Activated naive CD8-positive, alpha-beta T cell treated with anti-CD3 and anti-CD28 coated beads, Interleukin-2, amount 10 ng/mL, durations not matched to agents 7 days and 5 days (primary cell): ENCODE measurements at regions of chr9 and their contacts with region 1.

Region 1: GRCh38 chr9:104747558-104748358 is at the start of gene NIPSNAP3A:
- DNase-seq: peak; percentile 92
- ATAC-seq: peak; percentile 92
- H3K4me3 Mint-ChIP-seq: peak within 1 kb of the TSS; percentile 93
- H3K27ac Mint-ChIP-seq: peak within 1 kb of the TSS; percentile 99
- H3K4me1 Mint-ChIP-seq: peaks cover 17% of the 10 kb centered on the region
- H3K27me3 Mint-ChIP-seq: no peaks in the 10 kb centered on the region
- total RNA-seq, gene NIPSNAP3A: 18.3 to 18.7 TPM

Region 2: DNA sequence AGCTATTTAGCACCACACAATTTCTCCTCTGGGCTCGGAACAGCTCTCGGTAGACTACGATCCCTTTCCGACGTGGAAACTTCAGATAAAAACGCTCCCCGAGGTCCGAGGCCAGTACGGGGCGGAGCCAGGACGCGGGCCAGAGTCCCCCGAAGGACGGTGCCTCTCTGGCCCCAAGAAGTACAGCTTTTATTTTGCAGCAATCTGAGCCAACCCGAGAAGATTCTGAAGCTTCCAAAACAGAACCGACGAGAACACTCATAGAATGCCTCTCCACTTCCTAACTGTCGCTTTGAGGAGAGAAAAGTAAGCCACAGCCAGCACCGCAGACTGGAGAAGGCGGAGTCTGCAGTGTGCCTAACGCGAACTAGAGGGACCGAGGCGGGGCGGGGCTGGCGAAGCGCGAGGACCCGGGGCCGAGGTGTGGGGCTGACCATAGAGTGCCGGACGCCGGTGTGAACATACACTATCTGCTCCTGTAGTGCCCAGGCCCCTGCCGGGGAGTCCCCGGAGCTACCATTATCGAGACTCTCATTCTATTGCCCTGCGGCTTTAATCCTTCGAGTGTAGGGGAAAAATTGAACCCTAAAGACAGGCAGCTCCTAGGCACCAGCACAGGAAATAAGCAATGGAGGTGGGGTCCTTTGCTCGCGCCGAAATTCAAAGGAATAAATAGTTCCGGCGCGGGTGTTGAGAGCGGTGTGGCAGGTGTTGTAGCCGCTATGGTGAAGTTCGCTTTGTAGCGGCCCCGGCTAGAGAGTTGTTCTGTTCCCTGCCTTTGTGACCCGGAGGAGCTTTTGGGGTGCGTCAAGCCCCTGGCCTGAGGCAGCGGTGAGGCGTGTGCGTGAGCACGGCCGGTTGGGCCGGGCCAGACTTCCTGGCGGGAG is 653.9 kb before region 1 on chr9 and contains the start of gene SMC2:
- POLR2A ChIA-PET with region 1: interaction called, 28 read pairs
- DNase-seq: peak; percentile 94
- ATAC-seq: peak; percentile 93
- H3K4me3 Mint-ChIP-seq: peak within 1 kb of the TSS; percentile 98
- H3K27ac Mint-ChIP-seq: peak within 1 kb of the TSS; percentile 99
- H3K4me1 Mint-ChIP-seq: peaks cover 36% of the 10 kb centered on the region
- H3K27me3 Mint-ChIP-seq: peaks cover 2% of the 10 kb centered on the region
- total RNA-seq, gene SMC2: 48.0 to 50.3 TPM

Region 3: DNA sequence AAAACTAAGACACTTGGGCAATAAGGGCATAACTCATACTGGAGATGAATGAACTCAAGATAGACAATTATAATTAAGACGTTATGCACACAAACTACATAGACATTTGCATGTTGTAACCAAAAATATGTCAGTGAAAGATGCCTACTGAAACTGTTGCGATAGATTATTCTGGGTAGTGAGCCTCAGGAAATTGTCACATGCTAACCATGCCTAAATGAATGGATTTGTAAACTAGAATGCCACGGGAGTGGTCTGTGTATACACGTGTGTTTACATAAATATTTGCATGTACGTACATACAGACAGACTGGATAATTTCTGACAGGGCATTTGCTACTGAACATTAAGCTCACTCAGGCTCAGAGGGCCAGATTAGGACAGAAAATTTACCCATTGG is 17.4 kb after region 1 on chr9:
- POLR2A ChIA-PET with region 1: interaction called, 13 read pairs
- DNase-seq: no peak
- ATAC-seq: no peak
- H3K4me3 Mint-ChIP-seq: peak overlapping the region; percentile 93
- H3K27ac Mint-ChIP-seq: no peak overlapping the region
- H3K4me1 Mint-ChIP-seq: peaks cover 7% of the 10 kb centered on the region
- H3K27me3 Mint-ChIP-seq: peaks cover 2% of the 10 kb centered on the region

Region 4: GRCh38 chr9:105141146-105141975 is 393.6 kb after region 1 on chr9:
- POLR2A ChIA-PET with region 1: no interaction called
- DNase-seq: no peak
- ATAC-seq: no peak
- H3K4me3 Mint-ChIP-seq: no peak overlapping the region
- H3K27ac Mint-ChIP-seq: no peak overlapping the region
- H3K4me1 Mint-ChIP-seq: peaks cover 2% of the 10 kb centered on the region
- H3K27me3 Mint-ChIP-seq: peaks cover 12% of the 10 kb centered on the region